HepG2 (cell line): ENCODE measurements at regions of chr4 and their contacts with region 1.

Region 1: GRCh38 chr4:185709802-185710486 is 102.0 kb downstream of the SORBS2 start:
- DNase-seq: peak; percentile 74
- ATAC-seq: peak; percentile 29
- H3K4me3 ChIP-seq: no peak overlapping the region
- H3K27ac ChIP-seq: peak overlapping the region; percentile 48
- H3K4me1 ChIP-seq: peaks cover 58% of the 10 kb centered on the region
- H3K27me3 ChIP-seq: no peaks in the 10 kb centered on the region
- CTCF ChIP-seq: no peak
- EP300 ChIP-seq: peak in 1 of 2 experiments; percentile 31; a peak in 1 of 4 replicates
- POLR2A ChIP-seq: no peak
- RAD21 ChIP-seq: no peak

Region 2: DNA sequence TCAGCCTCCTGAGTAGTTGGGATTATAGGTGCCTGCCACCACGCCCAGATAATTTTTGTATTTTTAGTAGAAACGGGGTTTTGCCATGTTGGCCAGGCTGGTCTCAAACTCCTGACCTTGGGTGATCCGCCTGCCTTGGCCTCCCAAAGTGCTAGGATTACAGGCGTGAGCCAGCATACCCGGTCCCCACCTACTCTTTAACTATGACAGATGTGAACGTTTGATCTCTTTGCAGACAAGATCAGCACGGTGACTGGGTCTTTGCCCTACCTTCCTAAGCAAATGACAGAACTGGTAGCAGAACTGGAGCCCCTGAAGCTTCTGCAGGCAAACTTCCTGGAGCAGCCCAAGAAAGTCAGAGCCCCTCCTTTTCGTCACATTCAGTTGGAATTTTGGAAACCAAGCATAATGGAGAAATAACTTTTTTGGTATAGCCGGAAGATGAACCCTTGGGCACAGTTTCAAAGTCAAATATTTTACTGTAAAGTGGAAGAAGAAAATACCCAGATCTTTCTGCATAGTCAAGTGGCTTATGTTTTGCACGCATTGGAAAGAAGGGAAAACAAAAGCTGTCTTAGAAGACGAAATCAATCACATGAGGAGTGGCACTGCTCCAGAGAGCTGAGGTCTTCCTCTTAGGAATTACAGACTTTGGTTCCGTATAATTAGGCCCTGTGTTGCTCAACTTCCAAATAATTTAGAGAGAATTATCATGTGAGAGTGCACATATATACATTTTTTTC is 11.4 kb after region 1 on chr4:
- CTCF ChIA-PET with region 1: no interaction called
- POLR2A ChIA-PET with region 1: interaction called, 42 read pairs
- in situ Hi-C with region 1: no loop called
- intact Hi-C with region 1: no loop called
- DNase-seq: peak; percentile 68
- ATAC-seq: peak; percentile 92
- H3K4me3 ChIP-seq: peak overlapping the region; percentile 2 to 20 (median 14); a peak in 1 of 6 replicates
- H3K27ac ChIP-seq: peak overlapping the region; percentile 85
- H3K4me1 ChIP-seq: peaks cover 72% of the 10 kb centered on the region
- H3K27me3 ChIP-seq: no peaks in the 10 kb centered on the region
- CTCF ChIP-seq: no peak
- EP300 ChIP-seq: no peak
- POLR2A ChIP-seq: no peak
- RAD21 ChIP-seq: no peak